ENCODE measurements at regions of chr9 and their contacts with region 1.

Region 1: DNA sequence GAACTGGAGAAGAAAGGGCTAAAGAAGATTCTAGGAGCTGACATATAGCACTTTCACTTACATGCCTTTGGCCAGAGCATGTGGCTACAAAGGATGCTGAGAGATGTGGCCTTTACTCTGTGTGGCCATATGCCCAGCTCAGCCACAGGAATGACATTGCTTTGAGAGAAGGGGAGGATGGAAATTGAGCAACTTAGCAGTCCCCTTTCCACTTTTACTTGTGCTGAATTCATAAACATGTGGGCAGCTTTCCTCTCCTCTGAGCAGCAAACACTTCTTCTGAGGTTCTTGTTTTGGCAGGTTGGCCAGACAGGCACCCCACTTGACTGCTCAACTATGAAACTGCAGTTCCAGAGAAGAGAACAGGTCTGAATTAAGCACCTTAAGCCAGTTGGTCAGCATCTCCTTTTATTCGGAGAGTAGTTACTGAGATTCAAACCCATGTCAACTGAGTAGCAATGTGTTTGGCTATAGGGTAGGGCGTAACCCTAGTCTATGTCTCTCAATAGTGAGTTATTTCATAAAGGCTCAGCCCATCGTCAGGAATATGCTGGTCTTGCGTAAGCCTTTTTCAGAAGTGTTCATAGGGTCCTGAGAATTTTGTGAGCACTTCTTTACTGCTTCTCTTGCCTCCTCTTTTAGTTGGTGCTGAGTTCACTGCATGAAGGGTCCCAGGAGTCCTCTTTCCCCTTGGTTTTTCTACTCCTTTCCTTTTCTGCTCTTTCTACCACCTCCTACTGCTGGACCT is 134.5 kb downstream of the PALM2AKAP2 start:
- DNase-seq: no peak

Region 2: GRCh38 chr9:109627041-109627440 is 287.4 kb before region 1 on chr9:
- intact Hi-C with region 1: no loop called
- DNase-seq: no peak

Region 3: GRCh38 chr9:109831998-109832658 is 82.3 kb before region 1 on chr9:
- intact Hi-C with region 1: no loop called
- DNase-seq: no peak

Region 4: DNA sequence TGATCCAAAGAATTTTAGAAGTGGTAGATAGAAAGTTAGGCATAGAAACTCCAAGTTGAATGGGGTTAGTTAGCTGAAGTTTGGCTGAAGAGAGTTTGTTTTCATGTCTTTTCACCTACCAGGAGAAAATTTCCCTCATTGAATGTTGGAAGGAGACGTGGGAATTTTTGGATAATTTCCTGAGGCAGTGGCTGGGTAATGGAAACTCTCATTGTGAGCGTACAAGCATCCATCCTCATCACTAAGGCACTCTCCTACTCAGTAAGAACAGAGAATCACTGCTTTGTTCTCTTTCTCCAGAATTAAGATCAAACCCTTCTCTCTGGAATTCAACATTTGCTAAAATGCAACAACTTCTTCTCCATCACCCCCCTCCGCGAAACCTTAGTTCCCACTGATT is 45.2 kb after region 1 on chr9:
- intact Hi-C with region 1: loop called in 1 of 2 experiments (anchors 1 kb)
- DNase-seq: no peak

Region 5: GRCh38 chr9:109969573-109970237 is 55.3 kb after region 1 on chr9:
- intact Hi-C with region 1: no loop called
- DNase-seq: no peak

Region 6: GRCh38 chr9:110050925-110051355 is 136.5 kb after region 1 on chr9:
- intact Hi-C with region 1: loop called in 1 of 2 experiments (anchors 5 kb)
- DNase-seq: no peak